Dendritic cell treated with granulocyte-macrophage colony-stimulating factor and Interleukin-4, amounts not matched to agents 40 ng/mL and 50 ng/mL, for 4 days (primary cell): ENCODE measurements at regions of chr10 and their contacts with region 1.

Region 1: DNA sequence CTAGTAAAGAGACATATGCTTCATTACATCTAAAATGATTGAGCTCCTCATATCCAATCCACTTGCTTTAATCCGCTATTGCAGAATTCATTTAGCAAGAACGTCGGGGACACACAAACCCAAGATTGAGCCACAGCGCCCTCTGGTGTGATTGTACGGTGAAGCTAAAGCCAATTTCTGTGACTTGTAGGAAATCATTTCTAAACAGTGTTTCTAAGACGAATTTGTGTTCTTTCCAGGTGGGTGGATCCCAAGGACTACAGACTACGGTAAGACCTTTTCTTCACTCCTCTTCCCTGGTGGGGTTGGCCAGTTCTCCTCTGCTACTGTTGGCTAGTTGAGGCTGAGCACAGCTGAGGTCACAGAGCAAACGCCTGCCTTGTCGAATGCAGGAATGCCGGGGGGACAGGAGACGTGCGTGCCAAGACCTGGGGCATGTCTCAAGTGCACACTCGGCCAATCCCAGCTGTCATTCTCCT is 5.2 kb downstream of the DMBT1 start:
- H3K4me3 Mint-ChIP-seq: no peak overlapping the region
- H3K27ac Mint-ChIP-seq: no peak overlapping the region
- H3K4me1 Mint-ChIP-seq: no peaks in the 10 kb centered on the region
- H3K27me3 Mint-ChIP-seq: peaks cover 23% of the 10 kb centered on the region

Region 2: GRCh38 chr10:122298598-122299301 is 267.0 kb before region 1 on chr10:
- intact Hi-C with region 1: loop called (anchors 1 kb)
- H3K4me3 Mint-ChIP-seq: no peak overlapping the region
- H3K27ac Mint-ChIP-seq: no peak overlapping the region
- H3K4me1 Mint-ChIP-seq: no peaks in the 10 kb centered on the region
- H3K27me3 Mint-ChIP-seq: peaks cover 8% of the 10 kb centered on the region

Region 3: DNA sequence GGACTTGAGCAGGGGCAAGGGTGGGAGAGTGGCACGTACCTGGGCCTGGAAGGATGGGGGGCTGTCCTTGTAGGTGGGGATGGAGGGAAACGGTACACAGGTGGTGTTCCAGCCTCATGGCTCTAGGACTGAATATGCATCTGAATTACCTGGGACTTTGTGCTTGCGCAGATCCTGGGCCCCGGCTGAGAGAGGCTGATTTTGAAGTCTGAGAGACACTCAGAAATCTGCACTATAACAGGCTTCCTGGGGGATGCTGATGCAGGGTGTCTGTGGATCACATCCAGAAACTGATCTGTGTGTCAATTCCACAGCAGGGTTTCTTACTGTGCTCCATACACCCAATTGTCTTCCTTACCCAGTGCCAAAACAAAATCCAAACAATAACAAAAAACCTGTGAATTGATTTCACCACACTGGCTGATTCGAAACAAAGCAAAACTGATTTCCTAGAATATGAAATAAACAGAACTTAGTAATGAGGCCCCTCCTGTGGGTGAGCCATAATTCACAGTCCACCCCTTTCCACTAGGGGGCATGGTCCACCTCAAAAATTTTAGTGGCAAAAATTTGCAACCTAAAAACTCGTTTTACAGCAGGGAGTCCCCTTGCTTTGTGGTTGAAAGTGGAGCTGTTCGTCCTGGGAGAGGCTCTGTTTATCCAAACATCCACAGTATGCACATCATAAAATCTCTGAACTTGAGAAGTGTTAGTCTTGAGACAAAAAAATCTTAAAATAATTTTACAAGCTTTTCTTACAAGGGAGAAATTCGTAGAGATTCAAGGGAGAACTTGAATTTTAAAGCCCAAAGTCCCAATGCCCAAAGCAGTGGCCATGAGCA is 223.3 kb before region 1 on chr10:
- intact Hi-C with region 1: loop called (anchors 2 kb)
- H3K4me3 Mint-ChIP-seq: no peak overlapping the region
- H3K27ac Mint-ChIP-seq: no peak overlapping the region
- H3K4me1 Mint-ChIP-seq: peaks cover 11% of the 10 kb centered on the region
- H3K27me3 Mint-ChIP-seq: peaks cover 13% of the 10 kb centered on the region

Region 4: GRCh38 chr10:122435212-122435827 is 130.4 kb before region 1 on chr10:
- intact Hi-C with region 1: loop called (anchors 5 kb)
- H3K4me3 Mint-ChIP-seq: no peak overlapping the region
- H3K27ac Mint-ChIP-seq: no peak overlapping the region
- H3K4me1 Mint-ChIP-seq: no peaks in the 10 kb centered on the region
- H3K27me3 Mint-ChIP-seq: no peaks in the 10 kb centered on the region

Region 5: DNA sequence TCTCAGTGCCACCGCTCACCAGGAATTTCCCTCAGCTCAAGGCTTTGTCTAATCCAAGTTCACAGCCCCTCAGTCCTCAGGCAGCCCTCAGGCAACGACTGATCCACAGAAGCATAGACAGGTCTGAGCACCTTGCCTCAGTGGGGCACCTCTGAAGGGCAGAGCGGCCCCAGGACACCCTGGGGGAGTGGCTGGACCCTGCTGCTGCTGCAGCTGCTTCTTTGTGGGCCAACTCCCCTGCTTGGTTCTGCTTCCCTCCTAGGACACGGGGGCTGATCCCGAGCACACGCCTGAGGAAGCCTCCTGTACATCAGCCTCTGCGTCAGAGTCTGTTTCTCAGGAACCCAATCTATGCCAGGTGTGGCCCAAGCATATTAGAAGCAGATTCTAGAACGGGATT is 263.7 kb after region 1 on chr10:
- intact Hi-C with region 1: no loop called
- H3K4me3 Mint-ChIP-seq: no peak overlapping the region
- H3K27ac Mint-ChIP-seq: no peak overlapping the region
- H3K4me1 Mint-ChIP-seq: no peaks in the 10 kb centered on the region
- H3K27me3 Mint-ChIP-seq: peaks cover 4% of the 10 kb centered on the region